CD8-positive, alpha-beta T cell (primary cell): ENCODE measurements at regions of chr7 and their contacts with region 1.

Region 1: GRCh38 chr7:143008007-143008901 is 18.7 kb downstream of the OR9A2 start:
- DNase-seq: peak; percentile 70 to 89 (median 83)
- ATAC-seq: peak; percentile 98
- H3K4me3 ChIP-seq: no peak overlapping the region
- H3K4me3 Mint-ChIP-seq: no peak overlapping the region
- H3K27ac ChIP-seq: no peak overlapping the region
- H3K27ac Mint-ChIP-seq: no peak overlapping the region
- H3K4me1 ChIP-seq: no peaks in the 10 kb centered on the region
- H3K4me1 Mint-ChIP-seq: peaks cover 4% of the 10 kb centered on the region
- H3K27me3 ChIP-seq: peaks cover 0 to 2% of the 10 kb centered on the region in 2 experiments
- H3K27me3 Mint-ChIP-seq: peaks cover 8% of the 10 kb centered on the region
- CTCF ChIP-seq: peak; percentile 93

Region 2: DNA sequence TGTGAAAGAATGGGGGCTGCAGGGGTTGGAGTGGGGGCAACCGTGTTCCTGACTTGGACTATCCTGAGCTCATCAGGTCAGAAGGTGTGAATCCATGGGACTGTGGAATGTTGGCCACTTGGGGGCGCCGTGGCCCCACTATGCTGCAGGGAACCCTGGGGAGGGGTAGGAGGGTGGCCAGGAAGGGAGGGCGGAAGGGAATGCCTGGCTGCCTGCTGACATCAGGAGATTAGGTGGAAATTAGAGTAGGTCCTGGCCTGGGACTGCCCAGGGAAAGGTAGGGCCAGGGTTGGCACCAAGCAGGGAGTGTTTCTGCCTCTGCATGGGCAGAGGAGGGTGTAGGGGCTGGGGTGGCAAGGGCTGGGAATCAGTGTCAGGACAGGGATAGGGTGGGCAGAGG is 684.5 kb before region 1 on chr7:
- CTCF ChIA-PET with region 1: interaction called, 11 read pairs
- POLR2A ChIA-PET with region 1: no interaction called
- intact Hi-C with region 1: loop called in 1 of 2 experiments (anchors 5 kb)
- DNase-seq: peak in 5 of 9 experiments; percentile 49 to 65 (median 52)
- ATAC-seq: peak; percentile 47
- H3K4me3 ChIP-seq: no peak overlapping the region
- H3K4me3 Mint-ChIP-seq: no peak overlapping the region
- H3K27ac ChIP-seq: no peak overlapping the region
- H3K27ac Mint-ChIP-seq: peak overlapping the region; percentile 86
- H3K4me1 ChIP-seq: peaks cover 8% of the 10 kb centered on the region
- H3K4me1 Mint-ChIP-seq: peaks cover 27% of the 10 kb centered on the region
- H3K27me3 ChIP-seq: no peaks in the 10 kb centered on the region
- H3K27me3 Mint-ChIP-seq: peaks cover 7% of the 10 kb centered on the region
- CTCF ChIP-seq: peak; percentile 51

Region 3: GRCh38 chr7:142535123-142535779 is 473.0 kb before region 1 on chr7:
- CTCF ChIA-PET with region 1: interaction called, 3 read pairs
- POLR2A ChIA-PET with region 1: no interaction called
- intact Hi-C with region 1: loop called in 1 of 2 experiments (anchors 5 kb)
- DNase-seq: peak; percentile 24 to 82 (median 68)
- ATAC-seq: peak; percentile 77
- H3K4me3 ChIP-seq: peak overlapping the region; percentile 20 to 22
- H3K4me3 Mint-ChIP-seq: peak overlapping the region; percentile 38
- H3K27ac ChIP-seq: peak overlapping the region; percentile 42 to 46
- H3K27ac Mint-ChIP-seq: peak overlapping the region; percentile 73
- H3K4me1 ChIP-seq: peaks cover 24% of the 10 kb centered on the region
- H3K4me1 Mint-ChIP-seq: peaks cover 29% of the 10 kb centered on the region
- H3K27me3 ChIP-seq: no peaks in the 10 kb centered on the region
- H3K27me3 Mint-ChIP-seq: no peaks in the 10 kb centered on the region
- CTCF ChIP-seq: no peak

Region 4: DNA sequence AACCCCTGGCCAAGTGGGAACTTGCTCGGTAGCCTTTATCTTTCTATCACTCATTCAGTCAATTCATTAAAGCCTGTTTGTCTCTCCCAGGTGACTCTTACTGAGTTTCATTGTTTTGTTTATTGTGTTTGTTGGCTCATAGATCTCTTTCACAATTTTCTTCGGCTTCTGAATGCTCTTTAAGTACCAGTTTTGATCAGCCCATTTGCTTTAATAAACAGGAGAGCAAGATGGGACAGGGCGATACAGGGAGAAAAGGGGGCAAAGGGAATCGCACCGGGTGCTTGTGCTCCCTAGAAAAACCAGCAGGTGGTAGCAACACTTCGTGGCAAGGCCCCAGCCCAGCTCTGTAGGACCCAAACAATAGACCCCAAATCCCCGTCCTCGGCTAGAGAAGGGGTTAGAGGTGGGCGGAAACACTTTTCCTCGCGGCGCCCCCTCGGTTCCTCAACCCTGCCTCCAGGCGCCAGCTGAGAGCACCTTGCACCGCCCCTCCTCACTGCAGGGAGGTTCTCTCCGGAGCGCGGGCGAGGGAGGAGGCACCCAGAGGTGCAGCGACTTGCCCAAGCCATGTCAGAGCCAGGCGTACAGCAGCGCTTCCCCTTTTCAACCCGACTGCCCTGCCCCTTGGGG is 154.4 kb before region 1 on chr7:
- CTCF ChIA-PET with region 1: interaction called, 28 read pairs
- POLR2A ChIA-PET with region 1: no interaction called
- intact Hi-C with region 1: loop called (anchors 1 to 2 kb)
- DNase-seq: peak; percentile 36 to 82 (median 64)
- ATAC-seq: peak; percentile 76
- H3K4me3 ChIP-seq: peak overlapping the region; percentile 58 to 79
- H3K4me3 Mint-ChIP-seq: peak overlapping the region; percentile 98
- H3K27ac ChIP-seq: peak overlapping the region in 1 of 2 experiments; percentile 41
- H3K27ac Mint-ChIP-seq: peak overlapping the region; percentile 91
- H3K4me1 ChIP-seq: peaks cover 9% of the 10 kb centered on the region
- H3K4me1 Mint-ChIP-seq: peaks cover 14% of the 10 kb centered on the region
- H3K27me3 ChIP-seq: no peaks in the 10 kb centered on the region
- H3K27me3 Mint-ChIP-seq: no peaks in the 10 kb centered on the region
- CTCF ChIP-seq: peak; percentile 77

Region 5: DNA sequence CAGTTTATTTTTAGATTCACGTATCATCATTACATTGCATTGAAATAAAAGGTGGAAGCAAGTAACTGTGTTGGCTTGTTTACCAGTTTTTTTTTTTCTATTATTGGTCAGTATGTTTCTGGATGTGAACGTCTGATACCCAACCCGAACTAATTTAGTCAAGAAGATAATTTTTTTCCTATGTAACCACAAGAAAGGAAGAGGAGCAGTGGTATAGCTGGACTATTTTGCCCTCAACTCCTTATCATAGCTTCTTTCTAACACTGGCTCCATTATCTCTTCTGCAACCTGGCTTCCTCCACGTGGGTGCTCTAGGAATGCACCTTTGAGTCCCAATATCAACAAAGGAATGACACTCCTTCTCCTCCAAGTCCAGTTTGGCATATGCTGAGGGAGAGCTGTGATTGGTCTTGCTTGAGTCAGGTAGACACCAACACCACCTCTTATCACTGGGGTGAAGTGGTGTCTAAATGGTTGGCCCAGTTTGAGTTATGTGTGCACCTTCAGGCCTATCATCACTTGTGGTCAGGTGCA is 10.7 kb before region 1 on chr7:
- CTCF ChIA-PET with region 1: interaction called, 25 read pairs
- POLR2A ChIA-PET with region 1: no interaction called
- intact Hi-C with region 1: no loop called
- DNase-seq: no peak
- ATAC-seq: no peak
- H3K4me3 ChIP-seq: no peak overlapping the region
- H3K4me3 Mint-ChIP-seq: no peak overlapping the region
- H3K27ac ChIP-seq: no peak overlapping the region
- H3K27ac Mint-ChIP-seq: no peak overlapping the region
- H3K4me1 ChIP-seq: no peaks in the 10 kb centered on the region
- H3K4me1 Mint-ChIP-seq: no peaks in the 10 kb centered on the region
- H3K27me3 ChIP-seq: no peaks in the 10 kb centered on the region
- H3K27me3 Mint-ChIP-seq: no peaks in the 10 kb centered on the region
- CTCF ChIP-seq: no peak

Region 6: DNA sequence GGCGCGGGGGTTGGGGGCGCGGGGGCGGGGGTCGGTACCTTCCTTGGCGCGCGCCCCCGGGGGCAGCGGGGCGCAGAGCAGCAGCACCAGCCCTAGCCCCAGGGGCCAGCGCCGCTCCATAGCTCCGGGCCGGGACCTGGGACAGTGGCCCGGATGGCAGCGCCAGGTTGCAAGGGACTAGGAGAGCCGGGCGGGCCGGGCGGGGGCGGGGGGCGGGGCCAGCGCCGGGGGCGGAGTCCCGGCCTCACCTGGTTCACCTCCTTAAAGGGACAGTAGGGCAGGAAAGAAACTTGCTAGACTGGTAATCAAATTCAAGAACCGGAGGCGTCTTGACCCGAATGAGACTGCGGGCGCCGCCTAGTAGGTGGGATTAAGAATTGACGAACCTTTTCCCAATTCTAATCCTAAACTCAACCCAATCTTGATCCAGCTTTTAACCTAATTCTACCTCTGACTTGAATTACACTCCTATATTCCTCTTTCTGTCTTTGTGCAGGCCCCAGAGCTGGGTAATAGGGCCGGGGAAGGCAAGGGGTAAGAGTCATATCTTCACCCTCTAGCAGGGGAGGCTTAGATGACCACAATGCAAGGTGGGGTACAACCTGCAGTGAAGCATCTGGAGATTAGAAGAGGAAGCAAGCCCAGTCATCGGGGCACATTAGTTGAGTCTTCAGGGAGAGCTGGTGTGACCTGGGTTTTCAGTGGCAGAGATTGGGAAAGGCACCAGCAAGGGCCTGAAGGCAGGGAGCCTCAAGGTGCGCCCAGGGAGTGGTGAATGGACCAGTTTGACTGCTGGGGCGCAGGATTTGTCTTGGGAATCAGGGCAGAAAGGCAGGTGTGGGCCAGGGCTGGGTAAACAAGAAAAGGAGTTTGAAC is 400.7 kb after region 1 on chr7 and contains the start of gene EPHA1:
- CTCF ChIA-PET with region 1: interaction called, 4 read pairs
- POLR2A ChIA-PET with region 1: no interaction called
- intact Hi-C with region 1: loop called in 1 of 2 experiments (anchors 5 kb)
- DNase-seq: peak; percentile 14 to 77 (median 52)
- ATAC-seq: peak; percentile 71
- H3K4me3 ChIP-seq: peak within 1 kb of the TSS; percentile 56 to 58
- H3K4me3 Mint-ChIP-seq: peak within 1 kb of the TSS; percentile 95
- H3K27ac ChIP-seq: peak within 1 kb of the TSS; percentile 22 to 38
- H3K27ac Mint-ChIP-seq: peak within 1 kb of the TSS; percentile 91
- H3K4me1 ChIP-seq: peaks cover 48% of the 10 kb centered on the region
- H3K4me1 Mint-ChIP-seq: peaks cover 57% of the 10 kb centered on the region
- H3K27me3 ChIP-seq: peaks cover 0 to 2% of the 10 kb centered on the region in 2 experiments
- H3K27me3 Mint-ChIP-seq: no peaks in the 10 kb centered on the region
- CTCF ChIP-seq: no peak
- total RNA-seq, gene EPHA1: 8.3 to 13.1 TPM